Right ventricle myocardium inferior (tissue), 1 donor: ENCODE measurements at regions of chrX and their contacts with region 1.

Region 1: GRCh38 chrX:149962859-149963757 is 24.8 kb upstream of the EOLA2 start:
- DNase-seq: no peak
- ATAC-seq: peak; percentile 77

Region 2: DNA sequence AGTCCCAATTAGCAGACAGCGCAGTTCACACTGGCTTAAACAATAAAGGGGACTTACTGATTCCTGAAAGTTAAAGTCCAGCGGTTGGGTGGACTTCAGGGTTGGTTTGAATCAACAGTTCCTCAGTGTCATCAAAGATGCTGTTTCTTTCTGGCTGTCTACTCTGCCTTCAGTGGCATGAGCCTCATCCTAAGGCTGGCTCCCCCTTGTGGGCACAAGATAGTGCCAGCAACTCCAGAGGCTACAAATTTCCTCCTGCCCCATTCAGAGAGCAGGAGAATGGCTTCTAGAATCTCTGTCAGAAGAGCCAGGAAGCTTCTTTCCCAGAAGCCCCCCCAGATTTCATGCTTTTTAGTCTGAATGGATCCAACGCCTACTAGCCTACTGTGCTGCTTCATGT is 522.9 kb after region 1 on chrX:
- intact Hi-C with region 1: loop called (anchors 5 kb)
- DNase-seq: no peak
- ATAC-seq: no peak

Region 3: DNA sequence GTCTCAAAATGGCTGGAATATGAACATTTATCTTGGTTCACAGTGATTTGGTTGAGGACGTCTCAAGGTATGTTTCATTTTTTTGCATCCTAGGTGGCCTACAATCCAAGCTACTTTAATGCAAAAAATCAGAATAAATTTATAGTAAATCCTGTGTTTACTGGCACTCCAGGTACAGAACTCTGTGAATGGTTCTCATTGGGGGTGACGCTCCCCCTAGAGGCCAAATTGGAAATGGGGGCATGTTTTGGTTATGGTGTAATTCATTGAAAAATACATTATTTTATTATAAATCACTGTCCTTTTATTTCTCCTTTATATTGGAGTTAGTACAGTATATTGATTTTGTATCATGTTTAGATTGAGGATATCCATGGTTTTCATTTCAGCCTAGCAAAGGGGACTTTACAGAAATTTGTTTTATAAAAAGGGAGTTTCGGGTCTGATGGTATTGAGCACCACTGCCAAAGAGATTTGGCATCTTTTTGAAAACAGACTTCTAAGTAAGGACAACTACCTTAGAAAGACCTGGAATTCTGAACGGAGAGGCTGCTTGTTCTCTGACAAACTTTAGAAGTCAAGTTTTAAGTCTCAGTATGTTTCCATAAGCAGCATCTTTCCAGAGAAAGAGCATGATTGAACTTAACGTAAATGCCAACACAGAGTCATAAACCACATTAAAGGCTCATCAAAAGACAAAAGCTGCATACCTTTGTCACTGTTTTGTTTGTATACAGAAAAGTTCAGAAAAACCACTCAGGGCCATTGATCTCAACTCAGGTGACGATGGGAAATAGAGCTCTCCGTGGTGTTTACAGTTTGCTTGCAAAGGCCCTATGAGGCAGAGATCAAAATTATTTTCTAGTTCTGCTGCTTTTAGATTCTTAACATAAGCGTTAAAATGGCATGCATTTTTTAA is 624.7 kb after region 1 on chrX:
- intact Hi-C with region 1: loop called (anchors 5 kb)
- DNase-seq: no peak
- ATAC-seq: no peak